ENCODE measurements at regions of chr12 and their contacts with region 1.

Region 1: DNA sequence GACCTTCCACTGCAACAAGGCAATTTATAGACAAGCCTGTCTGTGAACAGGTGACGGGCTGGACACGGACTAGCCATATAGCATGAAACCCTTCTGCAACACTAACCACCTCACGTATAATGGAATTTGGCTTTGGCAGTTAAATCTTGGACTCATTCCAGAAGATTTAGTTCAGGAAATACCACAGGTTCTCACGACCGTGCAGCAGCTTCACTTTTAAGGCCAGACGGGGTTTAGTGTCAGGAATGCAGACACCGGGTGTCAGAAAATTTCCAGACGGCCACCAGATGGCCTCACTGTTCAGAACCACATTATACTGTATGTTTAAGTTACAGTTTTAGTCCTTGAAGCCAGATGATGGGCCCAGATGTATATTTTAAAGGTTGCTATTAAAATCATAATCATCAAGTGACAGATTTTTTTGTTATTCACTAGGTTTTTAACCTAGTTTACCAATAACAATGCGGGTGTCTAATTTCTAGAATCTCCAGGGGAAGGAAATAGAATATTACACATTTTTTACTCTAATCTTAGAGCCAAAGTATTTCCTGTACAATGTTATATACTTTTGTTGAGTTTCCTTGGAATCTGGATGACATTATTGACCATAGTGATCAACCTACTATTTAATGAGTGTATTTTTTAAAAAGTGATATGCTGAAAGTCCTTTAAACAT is 90.5 kb upstream of the TMPO start:
- DNase-seq: no peak
- H3K4me3 ChIP-seq: no peak overlapping the region
- H3K27ac ChIP-seq: no peak overlapping the region
- H3K4me1 ChIP-seq: no peaks in the 10 kb centered on the region; a peak in 1 of 7 replicates
- H3K27me3 ChIP-seq: no peaks in the 10 kb centered on the region
- CTCF ChIP-seq: peak; percentile 45 to 73 (median 71)
- EP300 ChIP-seq: no peak
- POLR2A ChIP-seq: no peak
- RAD21 ChIP-seq: peak; percentile 58 to 72

Region 2: DNA sequence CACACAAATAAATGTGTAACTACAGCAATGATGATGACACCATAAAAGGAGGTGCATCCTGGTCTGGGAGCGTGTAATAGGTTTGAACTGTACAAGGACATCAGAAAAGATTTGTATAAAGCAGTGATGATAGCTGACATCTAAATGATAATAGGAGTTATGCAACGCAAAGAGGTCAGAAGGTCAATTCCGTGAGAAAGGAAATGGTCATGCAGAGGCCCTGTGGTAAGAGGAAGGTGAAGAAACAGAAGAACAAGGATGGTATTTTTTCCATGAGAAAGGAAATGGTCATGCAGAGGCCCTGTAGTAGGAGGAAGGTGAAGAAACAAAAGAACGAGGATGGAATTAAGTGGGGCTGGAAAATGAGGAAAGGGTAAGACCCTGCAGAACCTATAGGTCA is 16.2 kb before region 1 on chr12:
- CTCF ChIA-PET with region 1: interaction called, 13 read pairs
- POLR2A ChIA-PET with region 1: no interaction called
- DNase-seq: no peak
- H3K4me3 ChIP-seq: no peak overlapping the region
- H3K27ac ChIP-seq: no peak overlapping the region
- H3K4me1 ChIP-seq: peaks cover 0 to 7% (median 2%) of the 10 kb centered on the region in 4 experiments; a peak in 3 of 7 replicates
- H3K27me3 ChIP-seq: no peaks in the 10 kb centered on the region
- CTCF ChIP-seq: no peak
- EP300 ChIP-seq: no peak
- POLR2A ChIP-seq: no peak
- RAD21 ChIP-seq: no peak

Region 3: GRCh38 chr12:98439981-98440581 is 15.2 kb after region 1 on chr12:
- CTCF ChIA-PET with region 1: interaction called, 11 read pairs
- POLR2A ChIA-PET with region 1: no interaction called
- DNase-seq: no peak
- H3K4me3 ChIP-seq: no peak overlapping the region
- H3K27ac ChIP-seq: no peak overlapping the region
- H3K4me1 ChIP-seq: no peaks in the 10 kb centered on the region
- H3K27me3 ChIP-seq: no peaks in the 10 kb centered on the region; a peak in 1 of 7 replicates
- CTCF ChIP-seq: no peak
- EP300 ChIP-seq: no peak
- POLR2A ChIP-seq: no peak
- RAD21 ChIP-seq: no peak

Measured in H1 (cell line).